Panc1 (cell line): ENCODE measurements at regions of chr3 and their contacts with region 1.

Region 1: GRCh38 chr3:56988458-56989168 is 71.9 kb upstream of the SPATA12 start:
- DNase-seq: no peak
- ATAC-seq: peak; percentile 87
- H3K4me3 ChIP-seq: no peak overlapping the region
- H3K27ac ChIP-seq: no peak overlapping the region
- H3K4me1 ChIP-seq: peaks cover 8% of the 10 kb centered on the region
- H3K27me3 ChIP-seq: no peaks in the 10 kb centered on the region
- CTCF ChIP-seq: peak; percentile 80

Region 2: GRCh38 chr3:56702490-56703315 is 285.9 kb before region 1 on chr3:
- CTCF ChIA-PET with region 1: interaction called, 8 read pairs
- POLR2A ChIA-PET with region 1: no interaction called
- in situ Hi-C with region 1: no loop called
- intact Hi-C with region 1: loop called (anchors 2 kb)
- DNase-seq: no peak
- ATAC-seq: peak; percentile 84
- H3K4me3 ChIP-seq: no peak overlapping the region
- H3K27ac ChIP-seq: no peak overlapping the region
- H3K4me1 ChIP-seq: no peaks in the 10 kb centered on the region
- H3K27me3 ChIP-seq: no peaks in the 10 kb centered on the region
- CTCF ChIP-seq: peak; percentile 75

Region 3: GRCh38 chr3:56801662-56802377 is 186.8 kb before region 1 on chr3 and contains the start of gene ARHGEF3:
- CTCF ChIA-PET with region 1: no interaction called
- POLR2A ChIA-PET with region 1: no interaction called
- in situ Hi-C with region 1: no loop called
- intact Hi-C with region 1: loop called (anchors 5 kb)
- DNase-seq: peak; percentile 43
- ATAC-seq: peak; percentile 99
- H3K4me3 ChIP-seq: peak within 1 kb of the TSS; percentile 58 to 70
- H3K27ac ChIP-seq: peak within 1 kb of the TSS; percentile 65
- H3K4me1 ChIP-seq: peaks cover 9% of the 10 kb centered on the region
- H3K27me3 ChIP-seq: no peaks in the 10 kb centered on the region
- CTCF ChIP-seq: peak; percentile 78
- total RNA-seq, gene ARHGEF3: 19.8 TPM

Region 4: DNA sequence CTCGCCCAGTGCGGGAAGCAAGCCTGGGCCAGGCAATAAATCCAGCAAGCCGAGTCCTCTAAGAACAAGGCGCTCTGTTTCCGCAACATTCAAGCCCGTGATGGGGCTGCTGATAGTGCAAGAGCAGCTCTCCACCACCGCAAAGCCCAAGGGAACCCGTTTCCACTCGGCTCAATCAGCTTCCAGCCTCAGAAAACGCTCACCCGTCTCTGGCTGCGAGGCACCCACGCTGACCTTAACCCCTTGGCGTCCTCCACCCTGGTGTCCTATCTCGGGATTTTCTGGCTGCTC is 89.7 kb after region 1 on chr3:
- CTCF ChIA-PET with region 1: no interaction called
- POLR2A ChIA-PET with region 1: no interaction called
- in situ Hi-C with region 1: loop called (anchors 25 kb)
- intact Hi-C with region 1: no loop called
- DNase-seq: no peak
- ATAC-seq: peak; percentile 45
- H3K4me3 ChIP-seq: peak overlapping the region; percentile 74 to 76
- H3K27ac ChIP-seq: peak overlapping the region; percentile 66
- H3K4me1 ChIP-seq: peaks cover 4% of the 10 kb centered on the region; the same call in 1 of the 2 replicates
- H3K27me3 ChIP-seq: no peaks in the 10 kb centered on the region
- CTCF ChIP-seq: no peak